ENCODE measurements at regions of chr6 and their contacts with region 1.

Region 1: DNA sequence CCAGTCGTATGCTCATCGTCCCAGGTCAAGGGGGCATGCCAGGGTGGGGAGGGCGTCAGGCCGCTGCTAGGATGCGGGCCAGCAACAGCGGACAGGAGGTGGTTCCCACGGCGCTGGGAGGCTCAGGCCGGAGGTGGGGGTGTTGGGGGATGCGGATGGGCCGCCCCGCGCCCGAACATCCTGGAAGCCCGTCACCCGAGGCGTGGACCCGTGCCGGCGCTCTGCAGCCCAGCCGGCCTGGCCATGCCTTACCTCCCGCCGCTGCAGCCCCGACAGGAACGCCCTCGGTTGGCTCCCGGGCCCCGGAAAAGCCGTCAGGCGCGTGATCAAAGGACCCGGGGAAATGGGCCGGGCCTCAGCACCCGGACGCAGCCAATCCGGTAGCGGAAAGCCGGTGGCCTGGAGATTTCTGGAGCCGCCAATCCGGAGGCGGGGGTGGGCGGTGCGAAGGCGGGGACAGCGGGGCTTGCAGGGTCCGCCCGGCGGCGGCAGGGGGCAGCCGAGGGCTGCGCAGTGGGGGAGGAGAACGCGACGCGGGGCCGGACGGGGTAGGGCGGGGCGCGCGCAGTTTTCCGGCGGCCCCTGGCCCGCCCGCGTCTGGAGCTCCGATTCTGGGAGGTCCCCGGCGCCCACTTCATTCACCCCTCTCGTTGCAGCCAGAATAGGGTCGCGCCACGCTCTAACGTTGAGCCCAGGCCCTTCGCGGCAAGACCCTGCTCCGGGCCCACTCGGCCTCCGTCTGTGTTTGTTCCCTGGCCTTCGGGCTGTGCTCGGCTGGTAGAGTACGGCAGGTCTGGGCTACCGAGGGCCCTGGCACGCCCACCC is at the start of gene SMIM29:
- DNase-seq: peak; percentile 96 to 99 (median 97)
- ATAC-seq: peak; percentile 91
- H3K4me3 ChIP-seq: peak within 1 kb of the TSS; percentile 87 to 89
- H3K4me3 Mint-ChIP-seq: peak within 1 kb of the TSS; percentile 93
- H3K27ac ChIP-seq: peak within 1 kb of the TSS; percentile 46 to 91
- H3K27ac Mint-ChIP-seq: peak within 1 kb of the TSS; percentile 95
- H3K4me1 ChIP-seq: peaks cover 16% of the 10 kb centered on the region
- H3K4me1 Mint-ChIP-seq: peaks cover 33% of the 10 kb centered on the region
- H3K27me3 ChIP-seq: no peaks in the 10 kb centered on the region
- H3K27me3 Mint-ChIP-seq: no peaks in the 10 kb centered on the region
- CTCF ChIP-seq: peak; percentile 83
- total RNA-seq, gene SMIM29: 12.7 to 14.2 TPM

Region 2: DNA sequence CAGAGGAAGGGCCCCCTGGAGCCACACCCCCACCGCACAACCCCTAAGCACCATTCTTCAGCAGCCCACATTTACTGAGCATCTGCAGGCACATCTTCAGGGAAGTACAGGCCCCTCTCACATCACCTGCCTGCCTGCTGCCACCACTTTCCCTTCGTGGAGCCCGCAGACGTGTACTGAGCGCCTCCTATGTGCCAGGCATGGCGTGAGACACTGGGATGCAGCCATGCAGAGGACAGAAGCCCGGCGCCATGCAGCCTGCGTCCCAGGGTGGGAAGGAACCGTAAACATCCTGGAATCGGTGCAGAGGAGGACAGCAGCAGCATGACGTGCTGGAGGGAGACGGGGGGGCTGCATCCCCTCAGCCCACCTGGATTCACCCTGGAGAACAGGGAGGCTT is 181.1 kb before region 1 on chr6:
- CTCF ChIA-PET with region 1: no interaction called
- POLR2A ChIA-PET with region 1: no interaction called
- intact Hi-C with region 1: no loop called
- DNase-seq: peak in 2 of 9 experiments; percentile 18 to 23
- ATAC-seq: no peak
- H3K4me3 ChIP-seq: no peak overlapping the region
- H3K4me3 Mint-ChIP-seq: no peak overlapping the region
- H3K27ac ChIP-seq: no peak overlapping the region
- H3K27ac Mint-ChIP-seq: no peak overlapping the region
- H3K4me1 ChIP-seq: no peaks in the 10 kb centered on the region
- H3K4me1 Mint-ChIP-seq: no peaks in the 10 kb centered on the region
- H3K27me3 ChIP-seq: peaks cover 0 to 13% of the 10 kb centered on the region in 2 experiments
- H3K27me3 Mint-ChIP-seq: peaks cover 11% of the 10 kb centered on the region
- CTCF ChIP-seq: no peak

Region 3: DNA sequence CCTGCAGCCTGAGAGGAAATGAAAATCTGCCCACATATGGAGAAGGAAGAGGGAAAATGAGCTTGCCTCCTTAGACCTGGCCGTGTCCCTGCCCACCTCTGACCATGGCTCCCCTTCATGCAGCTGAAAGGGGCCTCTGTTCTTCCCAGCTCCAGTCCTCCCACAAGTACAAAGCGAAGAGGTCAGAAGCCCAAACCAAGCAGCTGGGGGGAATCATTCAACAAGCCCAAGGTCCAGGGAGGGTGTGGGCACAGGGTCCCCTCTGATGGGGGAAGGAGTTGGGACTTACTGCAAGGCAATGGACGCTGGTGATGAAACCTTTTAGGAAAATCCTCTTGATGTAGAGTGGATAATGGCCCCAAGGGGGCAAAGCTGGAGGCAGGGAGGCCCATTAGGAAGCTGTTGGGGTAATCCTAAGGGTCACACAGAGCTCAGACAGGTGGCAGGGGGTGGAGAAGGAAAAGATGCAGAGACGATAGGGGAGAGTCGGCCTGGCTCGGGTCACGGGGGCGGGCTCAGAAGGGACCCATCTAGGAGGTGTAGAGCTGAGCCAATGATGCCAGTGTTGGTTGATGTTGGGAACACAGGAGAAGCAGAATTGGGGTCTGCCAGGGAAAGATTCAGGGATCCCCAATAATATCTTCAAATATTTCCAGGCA is 87.0 kb before region 1 on chr6:
- CTCF ChIA-PET with region 1: interaction called, 22 read pairs
- POLR2A ChIA-PET with region 1: no interaction called
- intact Hi-C with region 1: loop called (anchors 1 to 2 kb)
- DNase-seq: no peak
- ATAC-seq: no peak
- H3K4me3 ChIP-seq: no peak overlapping the region
- H3K4me3 Mint-ChIP-seq: no peak overlapping the region
- H3K27ac ChIP-seq: no peak overlapping the region
- H3K27ac Mint-ChIP-seq: no peak overlapping the region
- H3K4me1 ChIP-seq: no peaks in the 10 kb centered on the region
- H3K4me1 Mint-ChIP-seq: no peaks in the 10 kb centered on the region
- H3K27me3 ChIP-seq: no peaks in the 10 kb centered on the region
- H3K27me3 Mint-ChIP-seq: peaks cover 2% of the 10 kb centered on the region
- CTCF ChIP-seq: no peak

Region 4: DNA sequence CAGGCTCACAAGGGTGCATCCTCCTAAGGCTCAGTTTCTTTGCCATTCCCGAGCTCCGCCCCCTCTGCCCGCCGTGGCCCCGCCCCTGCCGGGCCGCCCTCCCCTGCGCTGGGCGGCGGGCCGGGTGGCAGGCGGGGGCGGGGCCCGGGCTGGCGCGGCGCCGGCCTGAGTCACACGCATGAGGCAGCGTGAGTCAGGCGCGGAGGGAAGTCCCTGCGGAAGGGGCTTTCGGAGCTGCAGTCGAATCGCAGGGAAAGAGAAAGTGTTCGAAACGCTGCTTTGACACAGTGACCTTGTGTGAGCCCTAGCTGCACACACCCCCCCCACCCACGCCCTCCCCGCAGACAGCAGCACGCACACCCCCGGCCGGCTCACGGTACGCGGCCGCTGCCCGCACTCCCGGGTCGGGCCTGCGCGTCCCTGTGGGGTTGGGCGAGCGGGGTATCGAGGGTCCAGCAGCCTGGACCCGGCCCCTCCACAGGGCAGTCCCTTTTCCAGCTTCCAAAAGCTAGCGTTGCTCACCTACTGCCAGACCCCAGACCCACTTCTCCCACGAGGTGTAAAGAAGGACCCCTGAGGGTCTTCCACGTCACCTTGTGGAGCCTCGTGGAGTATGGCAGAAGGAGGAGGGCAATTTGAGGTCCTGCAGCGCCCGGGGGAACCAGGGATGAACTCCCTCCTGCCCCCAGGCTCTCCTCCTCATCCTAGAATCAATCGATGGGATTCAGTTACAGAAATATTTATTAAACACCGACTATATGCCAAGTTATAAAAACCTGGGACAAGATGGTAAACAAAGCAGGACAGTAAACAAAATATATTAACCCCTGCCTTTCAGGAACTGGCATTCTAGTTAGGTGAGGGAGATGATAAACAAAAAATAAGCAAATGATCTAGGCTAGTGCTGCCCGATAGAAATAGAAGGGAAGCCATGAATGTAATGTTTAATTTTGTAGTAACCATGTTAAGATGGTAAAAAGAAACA is 24.7 kb before region 1 on chr6:
- CTCF ChIA-PET with region 1: interaction called, 5 read pairs
- POLR2A ChIA-PET with region 1: interaction called, 17 read pairs
- intact Hi-C with region 1: loop called (anchors 1 kb)
- DNase-seq: peak; percentile 88 to 99 (median 94)
- ATAC-seq: peak; percentile 98
- H3K4me3 ChIP-seq: peak overlapping the region; percentile 51 to 86
- H3K4me3 Mint-ChIP-seq: peak overlapping the region; percentile 70
- H3K27ac ChIP-seq: peak overlapping the region; percentile 76 to 87
- H3K27ac Mint-ChIP-seq: peak overlapping the region; percentile 89
- H3K4me1 ChIP-seq: peaks cover 14% of the 10 kb centered on the region
- H3K4me1 Mint-ChIP-seq: peaks cover 20% of the 10 kb centered on the region
- H3K27me3 ChIP-seq: no peaks in the 10 kb centered on the region
- H3K27me3 Mint-ChIP-seq: no peaks in the 10 kb centered on the region
- CTCF ChIP-seq: no peak

Region 5: GRCh38 chr6:34392497-34393190 is 143.7 kb after region 1 on chr6 and contains the start of gene NUDT3:
- CTCF ChIA-PET with region 1: interaction called, 7 read pairs
- POLR2A ChIA-PET with region 1: no interaction called
- intact Hi-C with region 1: loop called (anchors 1 to 2 kb)
- DNase-seq: peak; percentile 90 to 98 (median 93)
- ATAC-seq: peak; percentile 90
- H3K4me3 ChIP-seq: peak within 1 kb of the TSS; percentile 78 to 96
- H3K4me3 Mint-ChIP-seq: peak within 1 kb of the TSS; percentile 72
- H3K27ac ChIP-seq: peak within 1 kb of the TSS; percentile 71 to 75
- H3K27ac Mint-ChIP-seq: peak within 1 kb of the TSS; percentile 94
- H3K4me1 ChIP-seq: peaks cover 15% of the 10 kb centered on the region
- H3K4me1 Mint-ChIP-seq: peaks cover 26% of the 10 kb centered on the region
- H3K27me3 ChIP-seq: no peaks in the 10 kb centered on the region
- H3K27me3 Mint-ChIP-seq: no peaks in the 10 kb centered on the region
- CTCF ChIP-seq: peak; percentile 77
- total RNA-seq, gene NUDT3: 12.5 to 12.9 TPM

Region 6: DNA sequence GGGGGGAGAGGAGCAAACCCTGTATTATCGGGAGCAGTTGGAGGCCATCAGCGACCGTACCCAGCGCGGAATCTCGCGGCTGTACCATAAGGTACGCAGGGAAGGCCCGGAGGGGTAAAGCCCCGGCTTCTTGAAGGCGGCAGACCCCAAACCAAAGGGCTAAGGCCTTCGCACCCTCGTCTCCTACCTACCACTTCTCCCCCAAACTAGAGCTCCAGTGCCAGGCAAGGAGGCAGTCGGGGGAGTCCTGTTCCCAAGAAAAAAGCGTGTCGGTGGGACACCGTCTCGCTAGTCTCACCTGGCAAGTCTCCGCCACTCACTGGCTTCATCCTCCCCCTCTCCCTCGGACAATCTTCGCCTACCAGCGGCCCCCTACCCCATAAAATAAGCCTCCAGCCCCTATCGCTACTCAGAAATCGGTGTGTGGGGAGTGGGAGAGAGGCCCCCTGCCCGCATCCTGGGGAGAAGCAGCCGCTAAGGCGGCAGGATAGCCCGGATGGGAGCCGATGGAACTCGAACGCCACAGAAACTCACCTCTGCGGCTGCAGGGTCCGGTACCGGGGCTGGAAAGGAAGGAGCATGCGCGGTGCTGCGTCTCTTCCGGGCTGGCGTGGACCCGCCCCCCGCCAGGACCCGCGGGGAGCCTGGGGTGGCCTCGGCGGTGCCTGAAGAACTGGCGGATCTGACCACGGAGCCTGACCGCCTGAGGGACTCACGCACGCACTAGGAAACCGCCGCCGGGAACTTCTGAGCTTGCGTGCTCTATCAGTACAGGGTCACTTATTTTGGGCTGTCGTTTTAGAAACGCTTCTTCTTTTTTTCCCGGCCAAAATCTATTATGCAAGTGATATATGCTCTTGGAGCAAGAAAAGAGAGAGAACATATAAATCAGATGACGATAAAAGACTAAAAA is 176.8 kb after region 1 on chr6 and contains the start of gene RPS10:
- CTCF ChIA-PET with region 1: interaction called, 17 read pairs
- POLR2A ChIA-PET with region 1: interaction called, 9 read pairs
- intact Hi-C with region 1: loop called (anchors 1 kb)
- DNase-seq: peak; percentile 79 to 95 (median 89)
- ATAC-seq: peak; percentile 98
- H3K4me3 ChIP-seq: peak within 1 kb of the TSS; percentile 78 to 96
- H3K4me3 Mint-ChIP-seq: peak within 1 kb of the TSS; percentile 96
- H3K27ac ChIP-seq: peak within 1 kb of the TSS; percentile 90 to 95
- H3K27ac Mint-ChIP-seq: peak within 1 kb of the TSS; percentile 97
- H3K4me1 ChIP-seq: peaks cover 23% of the 10 kb centered on the region
- H3K4me1 Mint-ChIP-seq: peaks cover 36% of the 10 kb centered on the region
- H3K27me3 ChIP-seq: no peaks in the 10 kb centered on the region
- H3K27me3 Mint-ChIP-seq: no peaks in the 10 kb centered on the region
- CTCF ChIP-seq: no peak
- total RNA-seq, gene RPS10: 2,721 to 2,770 TPM

Region 7: GRCh38 chr6:34610819-34611477 is 362.0 kb after region 1 on chr6:
- CTCF ChIA-PET with region 1: interaction called, 10 read pairs
- POLR2A ChIA-PET with region 1: interaction called, 4 read pairs
- intact Hi-C with region 1: loop called (anchors 1 kb)
- DNase-seq: no peak
- ATAC-seq: no peak
- H3K4me3 ChIP-seq: no peak overlapping the region
- H3K4me3 Mint-ChIP-seq: no peak overlapping the region
- H3K27ac ChIP-seq: no peak overlapping the region
- H3K27ac Mint-ChIP-seq: peak overlapping the region; percentile 10
- H3K4me1 ChIP-seq: no peaks in the 10 kb centered on the region
- H3K4me1 Mint-ChIP-seq: peaks cover 6% of the 10 kb centered on the region
- H3K27me3 ChIP-seq: no peaks in the 10 kb centered on the region
- H3K27me3 Mint-ChIP-seq: no peaks in the 10 kb centered on the region
- CTCF ChIP-seq: no peak

Region 8: GRCh38 chr6:34791701-34792235 is 542.8 kb after region 1 on chr6 and contains the start of gene BLTP3A:
- CTCF ChIA-PET with region 1: no interaction called
- POLR2A ChIA-PET with region 1: no interaction called
- intact Hi-C with region 1: loop called in 1 of 2 experiments (anchors 5 kb)
- DNase-seq: peak; percentile 48 to 91 (median 71)
- ATAC-seq: peak; percentile 90
- H3K4me3 ChIP-seq: peak within 1 kb of the TSS; percentile 75 to 95
- H3K4me3 Mint-ChIP-seq: peak within 1 kb of the TSS; percentile 99
- H3K27ac ChIP-seq: peak within 1 kb of the TSS; percentile 75 to 79
- H3K27ac Mint-ChIP-seq: peak within 1 kb of the TSS; percentile 94
- H3K4me1 ChIP-seq: peaks cover 12% of the 10 kb centered on the region
- H3K4me1 Mint-ChIP-seq: peaks cover 29% of the 10 kb centered on the region
- H3K27me3 ChIP-seq: no peaks in the 10 kb centered on the region
- H3K27me3 Mint-ChIP-seq: no peaks in the 10 kb centered on the region
- CTCF ChIP-seq: no peak
- total RNA-seq, gene BLTP3A: 8.8 to 9.3 TPM

Region 9: GRCh38 chr6:35280903-35281302 is 1032.0 kb after region 1 on chr6:
- CTCF ChIA-PET with region 1: no interaction called
- POLR2A ChIA-PET with region 1: no interaction called
- intact Hi-C with region 1: no loop called
- DNase-seq: no peak
- ATAC-seq: no peak
- H3K4me3 ChIP-seq: no peak overlapping the region
- H3K4me3 Mint-ChIP-seq: no peak overlapping the region
- H3K27ac ChIP-seq: no peak overlapping the region
- H3K27ac Mint-ChIP-seq: no peak overlapping the region
- H3K4me1 ChIP-seq: no peaks in the 10 kb centered on the region
- H3K4me1 Mint-ChIP-seq: peaks cover 9% of the 10 kb centered on the region
- H3K27me3 ChIP-seq: no peaks in the 10 kb centered on the region
- H3K27me3 Mint-ChIP-seq: no peaks in the 10 kb centered on the region
- CTCF ChIP-seq: no peak